Heart left ventricle (tissue), 16 donors: ENCODE measurements at regions of chr5 and their contacts with region 1.

Region 1: DNA sequence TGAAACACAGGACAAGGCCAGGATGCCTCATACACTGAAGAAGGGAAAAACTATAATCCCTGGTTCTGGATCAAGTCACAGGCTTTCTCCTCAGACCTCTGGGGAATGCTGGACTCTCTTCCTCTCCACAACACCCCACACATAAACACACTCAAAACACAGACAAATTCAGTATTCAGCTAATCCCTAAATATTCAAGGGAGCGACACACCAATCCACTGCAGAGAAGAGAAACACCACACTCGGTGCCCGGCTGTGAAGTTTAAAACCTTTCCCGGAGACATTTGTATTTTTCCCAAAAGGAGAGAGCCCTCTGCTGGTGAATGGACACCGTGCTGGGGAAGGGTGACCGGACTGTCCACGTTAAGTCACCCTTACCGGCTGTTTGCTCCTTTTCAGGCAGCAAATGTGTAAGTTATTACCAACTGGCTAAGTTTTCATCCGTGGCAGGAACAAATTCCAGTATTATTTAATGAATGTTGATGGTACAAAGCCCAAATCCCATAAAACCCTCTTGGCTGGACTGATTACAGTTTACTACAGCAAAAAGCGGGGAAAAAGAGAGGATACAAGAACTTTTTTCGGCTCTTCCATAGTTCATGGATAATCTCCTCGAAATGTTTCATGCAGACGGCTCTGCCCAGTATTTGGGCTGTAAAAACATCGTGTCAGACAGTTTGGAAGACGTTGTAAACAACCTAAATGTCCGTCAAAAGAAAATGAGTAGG is 130.9 kb upstream of the SLC30A5 start:
- DNase-seq: peak in 4 of 5 donors; percentile 60 to 71 (median 63)
- ATAC-seq: peak; percentile 83 to 92 (median 88)
- H3K4me3 ChIP-seq: peak overlapping the region in 1 of 12 donors; percentile 10
- H3K27ac ChIP-seq: peak overlapping the region in 5 of 12 donors; percentile 0 to 38 (median 15)
- H3K4me1 ChIP-seq: peaks cover 0 to 9% (median 0%) of the 10 kb centered on the region in 12 donors
- H3K27me3 ChIP-seq: no peaks in the 10 kb centered on the region
- CTCF ChIP-seq: peak; percentile 71 to 92 (median 82)
- POLR2A ChIP-seq: no peak

Region 2: GRCh38 chr5:68279984-68280383 is 682.9 kb before region 1 on chr5:
- intact Hi-C with region 1: loop called in 6 of 10 experiments (anchors 5 kb)
- DNase-seq: no peak
- ATAC-seq: peak in 1 of 4 donors; percentile 19
- H3K4me3 ChIP-seq: peak overlapping the region in 1 of 12 donors; percentile 47
- H3K27ac ChIP-seq: peak overlapping the region in 2 of 12 donors; percentile 29 to 71
- H3K4me1 ChIP-seq: peaks cover 0 to 53% (median 9%) of the 10 kb centered on the region in 12 donors
- H3K27me3 ChIP-seq: no peaks in the 10 kb centered on the region
- CTCF ChIP-seq: no peak
- POLR2A ChIP-seq: no peak

Region 3: DNA sequence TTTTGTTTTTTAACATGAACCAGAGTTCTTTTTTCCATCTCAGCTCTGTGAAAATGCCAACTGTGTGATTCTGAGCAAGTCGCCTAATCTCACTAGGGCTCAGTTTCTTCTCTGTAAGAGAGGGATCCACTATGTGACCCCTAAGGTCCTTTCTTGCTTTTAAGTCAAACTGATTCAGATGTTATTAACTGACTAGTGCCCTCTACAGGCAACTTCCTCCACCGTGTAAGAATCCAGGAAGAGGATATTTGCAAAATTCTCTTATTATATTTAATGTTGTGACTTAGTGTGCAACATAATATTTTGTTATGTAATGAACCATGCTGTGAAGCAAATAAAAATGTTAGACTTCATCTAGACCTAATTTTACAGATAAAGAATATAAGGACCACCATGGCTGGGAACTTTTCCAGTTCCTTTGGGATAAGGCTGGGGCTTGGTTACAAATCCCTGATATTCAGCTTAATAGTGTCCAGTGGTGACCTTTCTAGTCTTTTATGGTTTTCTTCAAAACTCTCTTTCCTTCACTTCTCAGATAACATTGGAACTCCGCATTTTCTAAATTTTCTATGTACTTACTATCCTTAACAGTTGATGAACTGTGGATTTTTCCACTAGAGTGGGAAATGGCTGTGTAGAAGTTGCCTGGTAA is 502.6 kb before region 1 on chr5:
- intact Hi-C with region 1: loop called in 7 of 10 experiments (anchors 2 to 10 kb)
- DNase-seq: peak in 2 of 5 donors; percentile 23 to 46
- ATAC-seq: peak in 3 of 4 donors; percentile 29 to 53 (median 49)
- H3K4me3 ChIP-seq: no peak overlapping the region
- H3K27ac ChIP-seq: no peak overlapping the region
- H3K4me1 ChIP-seq: peaks cover 0 to 19% (median 7%) of the 10 kb centered on the region in 12 donors
- H3K27me3 ChIP-seq: no peaks in the 10 kb centered on the region
- CTCF ChIP-seq: peak; percentile 56 to 85 (median 77)
- POLR2A ChIP-seq: no peak

Region 4: GRCh38 chr5:68652534-68652965 is 310.4 kb before region 1 on chr5:
- intact Hi-C with region 1: loop called in 1 of 10 experiments (anchors 10 kb)
- DNase-seq: no peak
- ATAC-seq: no peak
- H3K4me3 ChIP-seq: no peak overlapping the region
- H3K27ac ChIP-seq: no peak overlapping the region
- H3K4me1 ChIP-seq: no peaks in the 10 kb centered on the region
- H3K27me3 ChIP-seq: no peaks in the 10 kb centered on the region
- CTCF ChIP-seq: no peak
- POLR2A ChIP-seq: no peak

Region 5: GRCh38 chr5:68872088-68872839 is 90.7 kb before region 1 on chr5:
- intact Hi-C with region 1: no loop called
- DNase-seq: no peak
- ATAC-seq: no peak
- H3K4me3 ChIP-seq: no peak overlapping the region
- H3K27ac ChIP-seq: no peak overlapping the region
- H3K4me1 ChIP-seq: no peaks in the 10 kb centered on the region
- H3K27me3 ChIP-seq: no peaks in the 10 kb centered on the region
- CTCF ChIP-seq: no peak
- POLR2A ChIP-seq: no peak

Region 6: DNA sequence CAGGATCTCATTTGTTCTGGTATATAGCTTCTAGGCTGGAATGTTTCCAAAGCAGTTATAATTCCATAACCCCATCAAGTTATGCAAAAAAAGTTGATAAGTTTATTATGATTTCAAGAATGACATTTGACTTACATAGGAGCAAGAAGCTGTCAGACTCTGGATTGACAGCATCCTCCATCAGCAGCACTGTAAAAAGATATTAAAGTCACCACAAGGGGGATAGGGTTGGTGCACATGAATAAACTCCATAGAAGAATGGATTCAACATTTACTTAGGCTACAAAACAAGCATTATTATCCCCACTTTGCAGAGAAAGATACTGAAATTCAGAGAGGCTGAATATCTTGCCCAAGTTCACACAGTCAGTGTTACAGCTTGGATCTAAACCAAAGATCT is 78.0 kb before region 1 on chr5:
- intact Hi-C with region 1: loop called in 2 of 10 experiments (anchors 2 to 10 kb)
- DNase-seq: no peak
- ATAC-seq: no peak
- H3K4me3 ChIP-seq: no peak overlapping the region
- H3K27ac ChIP-seq: no peak overlapping the region
- H3K4me1 ChIP-seq: no peaks in the 10 kb centered on the region
- H3K27me3 ChIP-seq: no peaks in the 10 kb centered on the region
- CTCF ChIP-seq: peak in 8 of 12 donors; percentile 2 to 37 (median 20)
- POLR2A ChIP-seq: no peak

Region 7: GRCh38 chr5:69083412-69083811 is 120.5 kb after region 1 on chr5:
- intact Hi-C with region 1: no loop called
- DNase-seq: no peak
- ATAC-seq: no peak
- H3K4me3 ChIP-seq: no peak overlapping the region
- H3K27ac ChIP-seq: no peak overlapping the region
- H3K4me1 ChIP-seq: no peaks in the 10 kb centered on the region
- H3K27me3 ChIP-seq: no peaks in the 10 kb centered on the region
- CTCF ChIP-seq: no peak
- POLR2A ChIP-seq: no peak